Activated B cell treated with CpG ODN at 0.5 μM for 24 hours (primary cell): ENCODE measurements at regions of chr3 and their contacts with region 1.

Region 1: DNA sequence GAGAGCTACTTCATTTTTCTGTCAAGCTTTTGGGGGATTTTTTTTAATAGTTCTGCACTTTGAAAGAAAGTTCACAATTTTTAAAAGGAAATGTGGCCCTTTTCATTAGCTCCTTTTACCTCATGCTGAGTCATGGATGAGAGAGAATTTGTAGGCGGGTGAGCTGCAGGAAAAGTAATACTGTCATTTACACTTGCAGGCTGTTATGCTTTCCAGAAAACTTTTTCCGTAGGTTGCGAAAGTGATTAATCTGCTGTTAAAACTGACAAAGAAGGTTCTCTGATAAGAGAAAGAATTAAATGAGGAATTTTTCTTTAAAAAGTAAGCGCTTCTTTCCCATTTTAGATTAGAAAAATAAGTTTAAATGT is 430.2 kb downstream of the LPP start:
- DNase-seq: no peak
- ATAC-seq: peak; percentile 8
- H3K4me3 Mint-ChIP-seq: no peak overlapping the region
- H3K27ac Mint-ChIP-seq: no peak overlapping the region
- H3K4me1 Mint-ChIP-seq: peaks cover 31% of the 10 kb centered on the region
- H3K27me3 Mint-ChIP-seq: no peaks in the 10 kb centered on the region
- CTCF ChIP-seq: no peak

Region 2: GRCh38 chr3:188154014-188154808 is 429.9 kb before region 1 on chr3 and contains the start of gene LPP:
- CTCF ChIA-PET with region 1: no interaction called
- POLR2A ChIA-PET with region 1: interaction called, 7 read pairs
- intact Hi-C with region 1: loop called (anchors 2 kb)
- DNase-seq: peak; percentile 88
- ATAC-seq: peak; percentile 89
- H3K4me3 Mint-ChIP-seq: peak within 1 kb of the TSS; percentile 96
- H3K27ac Mint-ChIP-seq: peak within 1 kb of the TSS; percentile 92
- H3K4me1 Mint-ChIP-seq: peaks cover 51% of the 10 kb centered on the region
- H3K27me3 Mint-ChIP-seq: no peaks in the 10 kb centered on the region
- CTCF ChIP-seq: no peak
- total RNA-seq, gene LPP: 49.5 and 60.1 TPM in 2 replicates

Region 3: DNA sequence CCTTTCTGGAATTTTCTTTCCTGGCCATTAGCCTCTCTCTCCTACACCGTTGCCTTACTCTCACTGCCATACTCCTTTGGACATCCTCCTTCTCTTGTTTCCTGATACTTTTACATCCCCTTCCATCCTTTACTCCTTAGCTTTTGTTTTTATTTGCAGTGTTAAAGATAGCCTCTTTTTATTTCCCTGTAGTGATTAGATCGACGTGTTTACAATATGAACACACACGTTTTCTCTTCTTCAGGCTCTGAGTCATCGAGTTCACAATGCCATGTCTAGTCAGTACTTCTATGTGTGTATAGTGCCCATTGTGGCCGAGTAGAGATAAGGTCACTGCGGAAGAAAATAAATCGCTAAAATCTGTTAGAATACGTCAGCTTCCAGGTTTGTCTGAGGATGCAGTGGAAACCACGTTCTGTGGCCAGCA is 221.7 kb before region 1 on chr3:
- CTCF ChIA-PET with region 1: no interaction called
- POLR2A ChIA-PET with region 1: interaction called, 3 read pairs
- intact Hi-C with region 1: loop called (anchors 2 kb)
- DNase-seq: no peak
- ATAC-seq: peak; percentile 63
- H3K4me3 Mint-ChIP-seq: peak overlapping the region; percentile 24
- H3K27ac Mint-ChIP-seq: peak overlapping the region; percentile 80
- H3K4me1 Mint-ChIP-seq: peaks cover 78% of the 10 kb centered on the region
- H3K27me3 Mint-ChIP-seq: no peaks in the 10 kb centered on the region
- CTCF ChIP-seq: no peak

Region 4: DNA sequence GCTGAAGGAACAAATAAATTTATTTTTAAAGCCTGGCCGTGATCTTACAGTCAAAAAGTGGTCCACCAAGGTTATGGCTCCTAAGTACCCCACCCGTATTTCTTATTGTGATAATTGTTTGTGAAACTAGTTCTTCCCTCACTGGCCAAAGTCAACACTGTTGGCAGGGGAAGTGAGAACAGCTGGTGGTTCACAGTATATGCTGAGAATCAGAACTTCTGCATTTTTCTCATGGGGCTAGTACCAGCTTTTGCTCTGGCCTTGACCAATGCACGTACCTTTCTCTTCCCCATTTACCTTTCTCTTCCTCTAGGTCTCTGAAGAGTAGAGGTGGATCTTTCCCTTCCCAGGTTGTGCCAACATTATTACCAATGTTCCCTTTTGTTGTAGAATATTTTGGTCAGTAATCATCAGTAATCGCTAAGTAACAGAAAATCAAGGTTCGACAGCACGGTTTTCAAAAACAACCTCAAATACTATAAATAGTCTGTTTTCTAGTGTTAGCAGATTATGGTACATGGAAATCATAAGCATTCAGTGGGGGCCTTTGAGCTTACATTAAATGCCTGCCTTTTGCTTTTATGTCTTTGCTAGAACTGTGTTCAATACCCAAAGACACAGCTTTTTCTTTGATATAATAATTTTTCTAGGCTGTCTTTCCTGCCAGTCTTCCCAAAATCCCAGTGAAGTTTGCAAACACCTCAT is 162.2 kb before region 1 on chr3:
- CTCF ChIA-PET with region 1: interaction called, 3 read pairs
- POLR2A ChIA-PET with region 1: interaction called, 11 read pairs
- intact Hi-C with region 1: loop called (anchors 5 kb)
- DNase-seq: no peak
- ATAC-seq: peak; percentile 95
- H3K4me3 Mint-ChIP-seq: peak overlapping the region; percentile 69
- H3K27ac Mint-ChIP-seq: peak overlapping the region; percentile 98
- H3K4me1 Mint-ChIP-seq: peaks cover 90% of the 10 kb centered on the region
- H3K27me3 Mint-ChIP-seq: no peaks in the 10 kb centered on the region
- CTCF ChIP-seq: no peak

Region 5: GRCh38 chr3:188489639-188490405 is 94.3 kb before region 1 on chr3:
- CTCF ChIA-PET with region 1: no interaction called
- POLR2A ChIA-PET with region 1: no interaction called
- intact Hi-C with region 1: loop called (anchors 5 kb)
- DNase-seq: no peak
- ATAC-seq: peak; percentile 88
- H3K4me3 Mint-ChIP-seq: peak overlapping the region; percentile 57
- H3K27ac Mint-ChIP-seq: peak overlapping the region; percentile 84
- H3K4me1 Mint-ChIP-seq: peaks cover 48% of the 10 kb centered on the region
- H3K27me3 Mint-ChIP-seq: no peaks in the 10 kb centered on the region
- CTCF ChIP-seq: no peak

Region 6: DNA sequence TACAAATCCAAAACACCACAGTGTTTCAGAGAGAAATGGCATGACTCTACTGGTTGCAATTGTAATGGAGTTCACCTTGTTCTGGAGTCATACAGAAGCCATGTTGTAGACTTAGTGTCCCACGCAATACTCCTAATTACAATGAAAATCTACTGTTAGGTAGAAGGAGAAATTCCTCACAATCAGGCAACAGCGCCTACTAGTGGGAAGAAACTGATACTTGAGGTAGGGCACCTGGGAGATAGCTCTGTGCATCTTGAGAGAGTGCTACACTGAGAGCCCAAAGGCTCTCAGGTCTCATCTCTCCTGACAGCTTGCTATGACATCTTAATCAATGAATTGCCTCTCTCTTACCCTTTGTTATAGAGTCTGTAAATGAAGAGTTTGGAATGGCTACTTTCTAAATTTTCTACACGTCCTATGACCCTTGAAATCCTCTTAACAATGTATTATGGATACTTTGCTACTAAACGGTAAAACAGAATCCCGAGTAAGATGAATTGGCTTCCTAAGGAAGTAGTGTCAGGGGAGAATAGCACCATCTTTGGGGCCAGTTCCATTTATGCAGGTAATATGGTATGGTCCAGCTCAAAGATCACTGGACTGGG is 165.0 kb after region 1 on chr3:
- CTCF ChIA-PET with region 1: interaction called, 4 read pairs
- POLR2A ChIA-PET with region 1: interaction called, 26 read pairs
- intact Hi-C with region 1: loop called (anchors 1 kb)
- DNase-seq: no peak
- ATAC-seq: no peak
- H3K4me3 Mint-ChIP-seq: no peak overlapping the region
- H3K27ac Mint-ChIP-seq: peak overlapping the region; percentile 55
- H3K4me1 Mint-ChIP-seq: peaks cover 43% of the 10 kb centered on the region
- H3K27me3 Mint-ChIP-seq: no peaks in the 10 kb centered on the region
- CTCF ChIP-seq: no peak